ENCODE measurements at regions of chr20 and their contacts with region 1.

Region 1: GRCh38 chr20:23245553-23246181 is 104.9 kb upstream of the NXT1 start:
- DNase-seq: peak; percentile 80
- CTCF ChIP-seq: peak; percentile 62

Region 2: DNA sequence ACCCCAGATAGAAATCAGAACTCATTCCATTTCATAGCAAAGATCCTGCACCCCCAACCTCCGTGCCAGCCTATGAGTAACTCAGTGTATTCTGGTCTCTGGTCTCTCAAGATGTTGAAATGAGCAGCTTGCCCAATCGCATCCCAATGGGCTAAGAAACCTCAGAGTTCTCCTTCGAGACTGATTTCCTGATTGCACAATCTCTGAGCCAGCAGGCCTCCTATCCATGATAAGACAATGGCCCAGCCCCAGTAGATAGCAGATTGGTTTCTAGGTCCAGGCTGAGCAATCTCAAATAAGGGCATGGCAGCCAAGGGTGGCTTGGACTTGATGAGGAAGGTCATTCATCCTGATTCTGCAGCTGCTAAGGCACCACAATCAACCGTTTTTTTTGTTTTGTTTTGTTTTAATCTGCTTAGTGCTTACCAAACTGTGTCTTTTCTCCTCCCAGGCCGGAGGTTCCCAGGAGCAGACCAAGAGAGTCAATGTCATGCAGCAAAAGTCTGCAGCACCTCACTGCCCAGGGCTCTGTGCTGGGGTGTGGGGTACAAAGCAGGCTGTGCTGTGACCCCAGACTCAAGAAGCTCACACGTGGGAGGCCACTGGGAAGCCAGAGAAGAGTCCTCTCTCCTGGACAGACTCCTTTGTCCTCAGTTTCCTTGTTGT is 20.1 kb before region 1 on chr20:
- CTCF ChIA-PET with region 1: interaction called, 10 read pairs
- POLR2A ChIA-PET with region 1: no interaction called
- DNase-seq: no peak
- CTCF ChIP-seq: no peak

Region 3: GRCh38 chr20:23235173-23236027 is 10.3 kb before region 1 on chr20:
- CTCF ChIA-PET with region 1: interaction called, 37 read pairs
- POLR2A ChIA-PET with region 1: no interaction called
- DNase-seq: peak; percentile 45
- CTCF ChIP-seq: peak; percentile 57

Region 4: GRCh38 chr20:23492292-23492691 is 246.6 kb after region 1 on chr20:
- CTCF ChIA-PET with region 1: no interaction called
- POLR2A ChIA-PET with region 1: no interaction called
- DNase-seq: peak; percentile 37
- CTCF ChIP-seq: no peak

Measured in GM10248 (cell line).